K562 (cell line): ENCODE measurements at regions of chr5 and their contacts with region 1.

Region 1: DNA sequence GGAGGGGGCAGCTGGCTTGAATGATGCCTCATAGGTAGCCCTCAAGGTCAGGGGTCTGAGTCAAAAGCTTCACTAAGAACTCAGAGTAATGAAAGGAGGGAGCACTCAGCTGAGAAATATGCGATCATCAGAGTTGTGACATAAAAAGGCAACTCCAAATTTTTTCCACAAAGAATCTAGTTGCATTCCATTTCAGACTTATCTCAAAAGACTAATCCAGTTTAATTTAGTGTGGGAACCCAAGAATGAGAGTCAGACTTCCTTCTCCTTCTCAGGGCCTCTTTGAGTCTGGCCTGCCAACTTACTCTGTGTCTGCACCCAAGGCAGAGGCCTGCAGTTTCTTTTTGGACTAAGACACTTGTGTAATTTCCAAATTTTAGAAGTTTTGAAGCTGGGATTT is 34.7 kb downstream of the GABRP start:
- DNase-seq: no peak
- ATAC-seq: no peak
- H3K4me3 ChIP-seq: no peak overlapping the region
- H3K27ac ChIP-seq: no peak overlapping the region
- H3K4me1 ChIP-seq: no peaks in the 10 kb centered on the region
- H3K27me3 ChIP-seq: no peaks in the 10 kb centered on the region
- CTCF ChIP-seq: no peak
- EP300 ChIP-seq: no peak
- POLR2A ChIP-seq: no peak
- RAD21 ChIP-seq: no peak

Region 2: GRCh38 chr5:170623576-170624181 is 194.6 kb before region 1 on chr5:
- CTCF ChIA-PET with region 1: no interaction called
- POLR2A ChIA-PET with region 1: no interaction called
- in situ Hi-C with region 1: no loop called
- intact Hi-C with region 1: no loop called
- DNase-seq: peak; percentile 55 to 65 (median 56)
- ATAC-seq: peak; percentile 93
- H3K4me3 ChIP-seq: no peak overlapping the region
- H3K27ac ChIP-seq: no peak overlapping the region
- H3K4me1 ChIP-seq: no peaks in the 10 kb centered on the region
- H3K27me3 ChIP-seq: peaks cover 0 to 9% of the 10 kb centered on the region in 2 experiments; a peak in 1 of 5 replicates
- CTCF ChIP-seq: peak; percentile 62 to 78 (median 73)
- EP300 ChIP-seq: no peak
- POLR2A ChIP-seq: no peak
- RAD21 ChIP-seq: peak in 1 of 2 experiments; percentile 65; a peak in 3 of 4 replicates

Region 3: GRCh38 chr5:171162602-171163001 is 344.4 kb after region 1 on chr5:
- CTCF ChIA-PET with region 1: no interaction called
- POLR2A ChIA-PET with region 1: no interaction called
- in situ Hi-C with region 1: no loop called
- intact Hi-C with region 1: loop called (anchors 10 kb)
- DNase-seq: peak; percentile 8 to 30 (median 20)
- ATAC-seq: peak; percentile 95
- H3K4me3 ChIP-seq: no peak overlapping the region
- H3K27ac ChIP-seq: no peak overlapping the region
- H3K4me1 ChIP-seq: no peaks in the 10 kb centered on the region
- H3K27me3 ChIP-seq: no peaks in the 10 kb centered on the region
- CTCF ChIP-seq: peak; percentile 39 to 57 (median 44); a peak in 5 of 6 replicates
- EP300 ChIP-seq: no peak
- POLR2A ChIP-seq: no peak
- RAD21 ChIP-seq: 0 out of 4 replicates have a peak, but pooled peaks of 1 of the 2 experiments have one; percentile 10